ENCODE measurements at regions of chr10 and their contacts with region 1.

Region 1: GRCh38 chr10:59234816-59235429 is 58.5 kb downstream of the PHYHIPL start:
- DNase-seq: peak; percentile 32
- H3K4me3 ChIP-seq: no peak overlapping the region
- H3K27ac ChIP-seq: no peak overlapping the region
- H3K4me1 ChIP-seq: no peaks in the 10 kb centered on the region
- H3K27me3 ChIP-seq: no peaks in the 10 kb centered on the region
- CTCF ChIP-seq: peak; percentile 35

Region 2: DNA sequence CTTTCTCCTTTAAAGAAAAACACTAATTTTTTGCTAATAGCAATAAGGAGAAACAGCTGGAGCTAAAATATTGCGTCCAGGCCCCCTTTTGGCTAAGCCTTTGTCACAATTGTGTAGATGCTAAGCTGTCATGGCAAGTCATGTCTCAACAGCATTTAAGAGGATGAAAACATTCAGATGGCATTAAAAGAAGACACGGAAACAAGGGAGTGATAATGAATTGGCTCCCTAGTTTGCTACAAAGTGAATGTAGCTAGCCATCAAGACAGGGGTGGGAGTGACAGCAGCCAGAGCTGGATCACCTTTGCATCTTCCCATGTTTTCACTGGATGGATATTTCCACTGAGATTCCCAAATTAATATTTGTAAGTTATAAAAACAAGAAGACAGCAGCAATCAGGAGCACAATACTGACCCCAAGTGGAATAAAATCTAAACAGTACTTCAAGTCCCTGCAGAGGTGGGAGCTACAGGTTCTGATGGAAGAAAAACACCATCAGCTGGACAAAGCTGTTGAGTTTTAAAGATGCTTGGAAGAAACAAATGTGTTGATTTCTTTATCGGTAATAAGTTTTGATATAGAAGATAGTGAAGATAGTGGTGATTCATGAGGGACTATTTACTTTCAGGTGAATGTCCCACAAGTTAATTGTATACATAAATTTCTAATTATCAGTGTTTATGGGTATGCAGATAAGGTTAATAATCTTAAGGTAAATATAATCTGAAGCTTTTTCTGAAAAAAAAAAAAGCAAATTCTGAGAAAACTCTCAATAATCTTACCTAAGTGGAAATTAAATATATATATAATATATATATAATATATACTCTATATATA is 345.3 kb after region 1 on chr10:
- intact Hi-C with region 1: loop called (anchors 2 kb)
- DNase-seq: no peak
- H3K4me3 ChIP-seq: no peak overlapping the region
- H3K27ac ChIP-seq: no peak overlapping the region
- H3K4me1 ChIP-seq: no peaks in the 10 kb centered on the region
- H3K27me3 ChIP-seq: no peaks in the 10 kb centered on the region
- CTCF ChIP-seq: peak; percentile 29

Region 3: DNA sequence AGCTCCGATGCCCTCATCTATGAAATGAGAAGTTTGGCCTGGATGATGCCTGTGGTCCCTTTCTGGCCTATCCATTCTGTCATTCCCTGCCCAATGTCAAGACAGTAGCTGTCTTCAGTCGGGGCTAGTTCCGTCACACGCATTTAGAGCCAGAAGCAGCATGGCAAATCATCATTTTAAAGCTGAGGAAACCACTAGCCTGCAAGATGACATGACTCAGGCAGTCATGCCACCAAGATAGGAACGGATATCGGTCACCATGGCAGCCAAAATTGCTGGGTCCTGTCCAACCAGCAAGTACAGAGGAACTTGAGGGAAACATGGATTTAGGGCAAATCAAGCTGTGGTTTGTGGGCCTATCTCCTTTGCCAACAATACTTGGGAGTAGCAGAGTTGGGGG is 582.9 kb after region 1 on chr10:
- intact Hi-C with region 1: loop called (anchors 10 kb)
- DNase-seq: no peak
- H3K4me3 ChIP-seq: no peak overlapping the region
- H3K27ac ChIP-seq: no peak overlapping the region
- H3K4me1 ChIP-seq: no peaks in the 10 kb centered on the region
- H3K27me3 ChIP-seq: no peaks in the 10 kb centered on the region
- CTCF ChIP-seq: no peak